ENCODE measurements at regions of chr3 and their contacts with region 1.

Region 1: DNA sequence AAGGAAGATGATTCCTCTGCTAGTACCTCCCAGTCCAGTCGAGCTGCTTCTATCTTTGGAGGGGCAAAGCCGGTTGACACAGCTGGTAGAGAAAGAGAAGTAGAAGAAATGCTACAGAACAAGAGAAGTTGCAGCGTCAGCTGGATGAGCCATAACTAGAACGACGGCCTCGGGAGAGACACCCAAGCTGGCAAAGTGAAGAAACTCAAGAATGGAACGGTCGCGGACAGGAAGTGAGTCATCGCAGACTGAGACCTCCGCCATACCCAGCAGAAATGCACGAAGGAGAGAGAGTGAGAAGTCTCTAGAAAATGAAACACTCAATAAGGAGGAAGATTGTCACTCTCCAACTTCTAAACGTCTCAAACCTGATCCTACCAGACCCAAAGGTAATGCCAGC is 19.0 kb upstream of the PARP14 start:
- DNase-seq: no peak
- H3K4me3 ChIP-seq: no peak overlapping the region
- H3K27ac ChIP-seq: no peak overlapping the region
- H3K4me1 ChIP-seq: no peaks in the 10 kb centered on the region
- H3K27me3 ChIP-seq: no peaks in the 10 kb centered on the region
- CTCF ChIP-seq: no peak

Region 2: GRCh38 chr3:122383771-122384697 is 277.6 kb before region 1 on chr3 and contains the start of gene FAM162A:
- CTCF ChIA-PET with region 1: no interaction called
- dilution Hi-C with region 1: no loop called
- in situ Hi-C with region 1: no loop called
- intact Hi-C with region 1: loop called (anchors 5 kb)
- DNase-seq: peak; percentile 91
- H3K4me3 ChIP-seq: peak within 1 kb of the TSS; percentile 64 to 87 (median 78)
- H3K27ac ChIP-seq: peak within 1 kb of the TSS; percentile 84
- H3K4me1 ChIP-seq: peaks cover 17% of the 10 kb centered on the region
- H3K27me3 ChIP-seq: no peaks in the 10 kb centered on the region
- CTCF ChIP-seq: peak; percentile 19 to 65
- total RNA-seq, gene FAM162A: 14.2 to 55.3 TPM

Measured in mammary epithelial cell (primary cell).